ENCODE measurements at regions of chr9 and their contacts with region 1.

Region 1: GRCh38 chr9:110183208-110184145 is 24.5 kb downstream of the C9orf152 start:
- DNase-seq: peak; percentile 71
- H3K4me3 Mint-ChIP-seq: no peak overlapping the region
- H3K27ac Mint-ChIP-seq: no peak overlapping the region
- H3K4me1 Mint-ChIP-seq: peaks cover 14% of the 10 kb centered on the region
- H3K27me3 Mint-ChIP-seq: no peaks in the 10 kb centered on the region
- CTCF ChIP-seq: peak; percentile 69

Region 2: GRCh38 chr9:110217656-110218099 is 34.2 kb after region 1 on chr9:
- CTCF ChIA-PET with region 1: interaction called, 10 read pairs
- intact Hi-C with region 1: loop called (anchors 1 kb)
- DNase-seq: no peak
- H3K4me3 Mint-ChIP-seq: no peak overlapping the region
- H3K27ac Mint-ChIP-seq: no peak overlapping the region
- H3K4me1 Mint-ChIP-seq: no peaks in the 10 kb centered on the region
- H3K27me3 Mint-ChIP-seq: no peaks in the 10 kb centered on the region
- CTCF ChIP-seq: no peak

Region 3: DNA sequence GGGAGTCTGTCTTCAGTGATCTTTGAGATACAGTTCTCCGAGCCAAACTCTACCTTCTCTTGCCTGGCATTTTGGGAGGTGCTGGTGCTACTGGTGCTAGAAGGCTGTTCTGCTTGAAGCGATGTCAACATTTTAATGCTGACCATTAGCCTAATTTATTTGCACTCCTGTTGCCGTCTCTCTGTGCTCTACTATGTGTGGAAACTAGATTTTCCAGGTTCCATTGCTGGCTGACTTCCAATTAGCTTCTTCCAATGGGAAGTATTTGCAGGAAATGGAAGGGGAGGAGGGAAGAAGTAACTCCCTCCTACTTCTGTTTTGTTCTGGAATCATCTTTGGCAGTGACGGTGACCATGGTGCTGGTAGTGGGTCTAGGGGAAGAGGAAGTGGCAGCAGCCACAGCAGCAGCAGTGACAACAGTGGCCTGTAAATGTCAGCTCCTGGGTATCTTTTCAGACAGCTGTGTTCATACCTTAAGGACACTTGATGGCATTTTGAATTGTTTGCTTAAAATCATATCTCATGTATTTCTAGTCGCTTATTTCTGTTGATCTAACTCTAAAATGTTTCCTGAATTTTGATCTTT is 146.3 kb after region 1 on chr9:
- CTCF ChIA-PET with region 1: no interaction called
- intact Hi-C with region 1: no loop called
- DNase-seq: no peak
- H3K4me3 Mint-ChIP-seq: no peak overlapping the region
- H3K27ac Mint-ChIP-seq: no peak overlapping the region
- H3K4me1 Mint-ChIP-seq: no peaks in the 10 kb centered on the region
- H3K27me3 Mint-ChIP-seq: no peaks in the 10 kb centered on the region
- CTCF ChIP-seq: no peak

Region 4: GRCh38 chr9:110340314-110340713 is 156.8 kb after region 1 on chr9:
- CTCF ChIA-PET with region 1: no interaction called
- intact Hi-C with region 1: loop called (anchors 10 kb)
- DNase-seq: peak; percentile 2
- H3K4me3 Mint-ChIP-seq: no peak overlapping the region
- H3K27ac Mint-ChIP-seq: no peak overlapping the region
- H3K4me1 Mint-ChIP-seq: no peaks in the 10 kb centered on the region
- H3K27me3 Mint-ChIP-seq: no peaks in the 10 kb centered on the region
- CTCF ChIP-seq: no peak

Region 5: DNA sequence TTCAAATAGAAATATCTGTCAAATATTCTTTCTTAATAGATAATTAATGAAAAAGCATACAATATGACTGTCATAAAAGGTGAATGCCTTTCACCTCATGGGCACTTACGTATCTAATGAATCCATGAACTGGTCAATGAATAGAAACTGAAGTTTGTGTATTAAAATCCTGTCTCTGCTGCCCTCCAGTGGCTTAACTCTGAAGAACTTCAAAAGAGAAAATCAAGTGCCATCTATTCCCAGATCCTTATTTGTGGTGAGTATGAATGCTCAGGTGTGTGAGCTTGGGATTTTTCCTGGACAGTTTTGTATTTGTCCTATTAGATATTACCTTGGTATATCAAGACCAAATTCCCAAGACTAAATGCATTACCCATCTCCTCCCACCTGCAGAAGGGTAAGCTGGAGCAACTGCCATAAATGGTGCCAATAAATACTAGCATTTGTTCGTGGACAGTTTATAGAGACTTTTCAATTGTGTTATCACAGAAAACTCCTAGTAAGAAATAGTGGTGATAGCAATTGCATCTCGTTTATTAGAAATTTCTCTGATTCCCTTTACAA is 440.1 kb after region 1 on chr9:
- CTCF ChIA-PET with region 1: interaction called, 4 read pairs
- intact Hi-C with region 1: loop called (anchors 5 kb)
- DNase-seq: peak; percentile 41
- H3K4me3 Mint-ChIP-seq: no peak overlapping the region
- H3K27ac Mint-ChIP-seq: no peak overlapping the region
- H3K4me1 Mint-ChIP-seq: peaks cover 9% of the 10 kb centered on the region
- H3K27me3 Mint-ChIP-seq: no peaks in the 10 kb centered on the region
- CTCF ChIP-seq: peak; percentile 40